GM23248 (cell line): ENCODE measurements at regions of chr9 and their contacts with region 1.

Region 1: GRCh38 chr9:20356403-20357035 is 265.8 kb downstream of the MLLT3 start:
- DNase-seq: peak; percentile 89
- H3K4me3 ChIP-seq: peak overlapping the region; percentile 47
- H3K27ac ChIP-seq: peak overlapping the region; percentile 64
- H3K4me1 ChIP-seq: peaks cover 38% of the 10 kb centered on the region
- H3K27me3 ChIP-seq: no peaks in the 10 kb centered on the region

Region 2: GRCh38 chr9:20622330-20623020 is 266.0 kb after region 1 on chr9 and contains the start of gene MLLT3:
- in situ Hi-C with region 1: loop called (anchors 10 kb)
- DNase-seq: peak; percentile 98
- H3K4me3 ChIP-seq: peak within 1 kb of the TSS; percentile 91
- H3K27ac ChIP-seq: peak within 1 kb of the TSS; percentile 79
- H3K4me1 ChIP-seq: peaks cover 15% of the 10 kb centered on the region
- H3K27me3 ChIP-seq: no peaks in the 10 kb centered on the region
- total RNA-seq, gene MLLT3: 11.9 and 12.1 TPM in 2 replicates

Region 3: DNA sequence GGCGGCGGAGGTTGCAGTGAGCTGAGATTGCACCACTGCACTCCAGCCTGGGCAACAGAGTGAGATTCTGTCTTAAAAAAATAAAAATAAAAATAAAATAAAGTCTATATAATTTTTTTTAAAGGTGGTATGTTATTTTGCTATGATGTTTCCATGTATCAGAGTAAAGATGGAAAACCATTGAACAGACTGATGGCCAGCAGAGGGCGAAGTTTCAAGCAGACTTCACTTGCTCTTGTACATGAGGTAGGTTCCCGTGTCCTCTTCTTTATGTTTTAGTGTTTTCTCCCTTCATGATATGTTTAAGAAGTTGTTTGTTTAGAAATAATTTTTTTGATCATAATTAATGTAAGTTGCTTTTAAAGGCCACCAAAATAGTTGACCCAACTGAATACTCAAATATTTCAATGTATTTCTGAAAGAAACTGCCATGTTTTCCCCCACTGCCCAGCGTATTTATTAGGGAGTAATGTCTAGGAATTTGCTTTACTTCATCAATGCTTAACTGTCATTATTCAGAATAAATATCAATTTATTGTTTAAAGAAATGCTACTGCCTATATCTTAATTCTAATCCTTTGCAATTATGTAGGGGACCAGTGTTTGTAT is 528.6 kb after region 1 on chr9:
- in situ Hi-C with region 1: no loop called
- DNase-seq: peak; percentile 66
- H3K4me3 ChIP-seq: no peak overlapping the region
- H3K27ac ChIP-seq: no peak overlapping the region
- H3K4me1 ChIP-seq: no peaks in the 10 kb centered on the region
- H3K27me3 ChIP-seq: no peaks in the 10 kb centered on the region